A673 (cell line): ENCODE measurements at regions of chr7 and their contacts with region 1.

Region 1: GRCh38 chr7:37504801-37505200 is 56.1 kb upstream of the ELMO1 start:
- DNase-seq: no peak
- H3K4me3 ChIP-seq: no peak overlapping the region
- H3K27ac ChIP-seq: no peak overlapping the region
- H3K4me1 ChIP-seq: no peaks in the 10 kb centered on the region
- H3K27me3 ChIP-seq: peaks cover 13% of the 10 kb centered on the region
- CTCF ChIP-seq: no peak

Region 2: GRCh38 chr7:37284805-37285231 is 220.0 kb before region 1 on chr7:
- CTCF ChIA-PET with region 1: no interaction called
- POLR2A ChIA-PET with region 1: no interaction called
- intact Hi-C with region 1: loop called (anchors 5 kb)
- DNase-seq: peak; percentile 57
- H3K4me3 ChIP-seq: no peak overlapping the region
- H3K27ac ChIP-seq: no peak overlapping the region
- H3K4me1 ChIP-seq: no peaks in the 10 kb centered on the region
- H3K27me3 ChIP-seq: no peaks in the 10 kb centered on the region
- CTCF ChIP-seq: peak; percentile 88

Region 3: GRCh38 chr7:37376386-37376785 is 128.4 kb before region 1 on chr7:
- CTCF ChIA-PET with region 1: no interaction called
- POLR2A ChIA-PET with region 1: no interaction called
- intact Hi-C with region 1: no loop called
- DNase-seq: no peak
- H3K4me3 ChIP-seq: no peak overlapping the region
- H3K27ac ChIP-seq: no peak overlapping the region
- H3K4me1 ChIP-seq: no peaks in the 10 kb centered on the region
- H3K27me3 ChIP-seq: no peaks in the 10 kb centered on the region
- CTCF ChIP-seq: no peak

Region 4: DNA sequence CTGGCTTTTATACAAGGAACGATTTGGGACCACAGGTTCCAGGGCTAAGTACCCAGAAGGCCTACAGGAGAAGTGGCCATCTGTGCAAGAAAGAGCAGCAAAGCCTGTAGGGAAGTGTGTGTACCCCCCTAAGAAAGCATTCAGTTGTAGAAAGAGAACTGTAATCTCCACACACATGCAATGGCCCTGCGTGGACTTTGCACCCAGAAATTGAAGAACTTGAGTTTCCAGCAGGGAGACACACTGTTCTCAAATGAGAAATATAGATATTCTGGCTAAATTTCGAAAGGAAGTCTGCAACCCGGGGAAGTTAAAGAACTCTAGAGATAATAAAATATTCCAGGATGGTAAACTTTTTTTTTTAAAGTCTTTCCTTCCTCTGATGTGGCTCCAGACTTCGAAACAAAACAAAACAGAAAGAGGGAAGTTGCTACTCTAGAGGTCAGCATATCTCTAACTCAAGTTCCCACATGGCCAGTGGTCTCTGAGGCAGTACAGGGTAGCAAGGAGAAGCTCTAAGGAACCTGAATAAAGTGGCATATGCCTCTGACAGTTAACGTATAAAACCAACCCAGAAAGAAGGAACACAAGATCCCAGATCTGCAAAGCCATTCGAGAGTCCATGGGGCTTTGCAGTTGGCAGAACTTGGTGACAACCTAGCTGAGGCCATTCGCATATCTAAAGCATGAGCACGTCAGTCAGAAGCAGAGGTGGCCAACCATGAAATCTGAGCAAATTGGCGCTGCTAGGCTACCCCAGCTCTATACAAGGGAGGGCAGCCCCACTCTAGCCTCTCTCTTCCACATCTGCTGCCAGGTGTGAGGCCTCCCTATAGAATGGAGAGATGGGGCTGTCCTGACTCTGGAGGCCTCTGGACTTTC is 112.8 kb before region 1 on chr7:
- CTCF ChIA-PET with region 1: no interaction called
- POLR2A ChIA-PET with region 1: no interaction called
- intact Hi-C with region 1: no loop called
- DNase-seq: no peak
- H3K4me3 ChIP-seq: no peak overlapping the region
- H3K27ac ChIP-seq: no peak overlapping the region
- H3K4me1 ChIP-seq: no peaks in the 10 kb centered on the region
- H3K27me3 ChIP-seq: no peaks in the 10 kb centered on the region
- CTCF ChIP-seq: no peak

Region 5: DNA sequence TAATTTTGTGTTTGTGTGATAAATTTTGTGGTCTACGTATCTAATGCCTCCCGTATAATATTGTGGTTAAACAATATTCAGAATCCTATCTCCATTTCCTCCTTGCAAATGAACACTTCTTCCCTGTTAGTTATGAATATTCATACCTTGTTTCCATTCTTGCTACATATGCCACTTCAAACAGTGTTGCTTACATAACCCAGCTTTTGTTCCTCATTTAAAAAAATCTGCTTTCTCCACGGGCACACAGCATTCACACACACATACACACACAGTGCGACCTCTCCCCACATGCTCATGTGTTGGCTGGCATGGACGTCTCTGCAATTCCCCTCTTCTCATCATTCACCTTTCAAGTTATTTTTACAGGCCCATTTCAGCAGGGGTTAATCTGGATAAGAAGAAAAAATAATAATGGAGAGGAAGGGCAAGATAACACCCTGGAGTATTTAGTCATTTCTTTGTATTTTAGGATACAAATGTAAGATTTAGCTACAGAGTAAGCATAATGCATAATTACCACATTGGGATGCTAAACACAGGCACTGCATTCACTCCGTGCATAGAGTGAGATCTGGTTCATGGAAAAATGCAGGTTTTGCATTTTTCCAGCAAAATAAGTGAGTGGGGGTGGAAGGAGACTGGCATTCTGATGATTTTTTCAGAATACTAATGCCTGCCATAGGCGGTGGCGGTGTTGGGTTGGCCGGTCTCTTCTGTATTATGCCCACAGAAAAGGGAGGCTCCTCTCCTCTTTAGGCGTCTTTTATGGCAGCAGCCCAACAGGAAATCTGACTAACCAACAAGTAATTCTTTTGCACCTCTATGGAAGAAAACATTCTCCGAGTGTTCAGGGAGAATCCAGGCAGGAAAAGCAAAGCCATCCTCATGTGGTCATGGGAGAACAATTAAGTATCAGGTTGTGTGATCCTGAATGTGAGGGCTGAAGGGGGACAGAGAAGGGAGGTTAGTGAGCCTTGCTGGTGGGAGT is 24.5 kb before region 1 on chr7:
- CTCF ChIA-PET with region 1: no interaction called
- POLR2A ChIA-PET with region 1: no interaction called
- intact Hi-C with region 1: no loop called
- DNase-seq: no peak
- H3K4me3 ChIP-seq: no peak overlapping the region
- H3K27ac ChIP-seq: no peak overlapping the region
- H3K4me1 ChIP-seq: no peaks in the 10 kb centered on the region
- H3K27me3 ChIP-seq: no peaks in the 10 kb centered on the region
- CTCF ChIP-seq: no peak

Region 6: GRCh38 chr7:38699471-38699870 is 1194.7 kb after region 1 on chr7:
- CTCF ChIA-PET with region 1: no interaction called
- POLR2A ChIA-PET with region 1: no interaction called
- intact Hi-C with region 1: no loop called
- DNase-seq: peak; percentile 23
- H3K4me3 ChIP-seq: no peak overlapping the region
- H3K27ac ChIP-seq: no peak overlapping the region
- H3K4me1 ChIP-seq: no peaks in the 10 kb centered on the region
- H3K27me3 ChIP-seq: no peaks in the 10 kb centered on the region
- CTCF ChIP-seq: no peak